CD8-positive, alpha-beta memory T cell (primary cell): ENCODE measurements at regions of chrX and their contacts with region 1.

Region 1: GRCh38 chrX:77899081-77899828 is at the start of gene COX7B:
- DNase-seq: peak; percentile 24 to 87 (median 80)
- H3K4me3 ChIP-seq: peak within 1 kb of the TSS; percentile 74
- H3K4me3 Mint-ChIP-seq: peak within 1 kb of the TSS; percentile 85 to 98 (median 93)
- H3K27ac ChIP-seq: peak within 1 kb of the TSS; percentile 81
- H3K27ac Mint-ChIP-seq: peak within 1 kb of the TSS; percentile 92 to 99 (median 96)
- H3K4me1 ChIP-seq: peaks cover 16% of the 10 kb centered on the region
- H3K4me1 Mint-ChIP-seq: peaks cover 17 to 37% (median 31%) of the 10 kb centered on the region in 3 donors
- H3K27me3 ChIP-seq: no peaks in the 10 kb centered on the region
- H3K27me3 Mint-ChIP-seq: no peaks in the 10 kb centered on the region
- total RNA-seq, gene COX7B: 298 to 348 TPM

Region 2: GRCh38 chrX:77910108-77910840 is 11.0 kb after region 1 on chrX and contains the start of gene ATP7A:
- CTCF ChIA-PET with region 1: interaction called, 37 read pairs
- POLR2A ChIA-PET with region 1: interaction called, 21 read pairs
- DNase-seq: peak; percentile 84 to 96 (median 88)
- H3K4me3 ChIP-seq: peak within 1 kb of the TSS; percentile 94
- H3K4me3 Mint-ChIP-seq: peak within 1 kb of the TSS; percentile 92 to 99 (median 95)
- H3K27ac ChIP-seq: peak within 1 kb of the TSS; percentile 82
- H3K27ac Mint-ChIP-seq: peak within 1 kb of the TSS; percentile 89 to 100 (median 98)
- H3K4me1 ChIP-seq: peaks cover 22% of the 10 kb centered on the region
- H3K4me1 Mint-ChIP-seq: peaks cover 18 to 22% (median 21%) of the 10 kb centered on the region in 3 donors
- H3K27me3 ChIP-seq: no peaks in the 10 kb centered on the region
- H3K27me3 Mint-ChIP-seq: peaks cover 0 to 4% of the 10 kb centered on the region in 2 donors
- total RNA-seq, gene ATP7A: 5.8 to 6.5 TPM

Region 3: GRCh38 chrX:78024349-78025108 is 125.3 kb after region 1 on chrX:
- CTCF ChIA-PET with region 1: interaction called, 12 read pairs
- POLR2A ChIA-PET with region 1: no interaction called
- DNase-seq: peak in 3 of 5 donors; percentile 37 to 48 (median 47)
- H3K4me3 ChIP-seq: no peak overlapping the region
- H3K4me3 Mint-ChIP-seq: no peak overlapping the region
- H3K27ac ChIP-seq: no peak overlapping the region
- H3K27ac Mint-ChIP-seq: peak overlapping the region in 3 of 8 donors; percentile 8 to 18 (median 8)
- H3K4me1 ChIP-seq: no peaks in the 10 kb centered on the region
- H3K4me1 Mint-ChIP-seq: peaks cover 4 to 6% (median 5%) of the 10 kb centered on the region in 3 donors
- H3K27me3 ChIP-seq: no peaks in the 10 kb centered on the region
- H3K27me3 Mint-ChIP-seq: peaks cover 0 to 7% of the 10 kb centered on the region in 2 donors